ENCODE measurements at regions of chr1 and their contacts with region 1.

Region 1: GRCh38 chr1:59596441-59596861 is 218.3 kb upstream of the HOOK1 start:
- DNase-seq: peak in 1 of 2 donors; percentile 16
- ATAC-seq: peak in 2 of 4 donors; percentile 25 to 26
- H3K4me3 ChIP-seq: no peak overlapping the region
- H3K27ac ChIP-seq: peak overlapping the region; percentile 90
- H3K4me1 ChIP-seq: peaks cover 59% of the 10 kb centered on the region
- H3K27me3 ChIP-seq: no peaks in the 10 kb centered on the region
- CTCF ChIP-seq: no peak

Region 2: GRCh38 chr1:59393211-59394180 is 203.0 kb before region 1 on chr1:
- intact Hi-C with region 1: loop called in 1 of 2 experiments (anchors 2 kb)
- DNase-seq: peak; percentile 77 to 91
- ATAC-seq: peak; percentile 92 to 96 (median 94)
- H3K4me3 ChIP-seq: peak overlapping the region; percentile 49
- H3K27ac ChIP-seq: peak overlapping the region; percentile 93
- H3K4me1 ChIP-seq: peaks cover 69% of the 10 kb centered on the region
- H3K27me3 ChIP-seq: no peaks in the 10 kb centered on the region
- CTCF ChIP-seq: no peak

Region 3: GRCh38 chr1:59520827-59521418 is 75.5 kb before region 1 on chr1:
- intact Hi-C with region 1: loop called in 1 of 2 experiments (anchors 5 kb)
- DNase-seq: no peak
- ATAC-seq: peak; percentile 48 to 62 (median 56)
- H3K4me3 ChIP-seq: no peak overlapping the region
- H3K27ac ChIP-seq: peak overlapping the region; percentile 86
- H3K4me1 ChIP-seq: peaks cover 34% of the 10 kb centered on the region
- H3K27me3 ChIP-seq: no peaks in the 10 kb centered on the region
- CTCF ChIP-seq: no peak

Region 4: DNA sequence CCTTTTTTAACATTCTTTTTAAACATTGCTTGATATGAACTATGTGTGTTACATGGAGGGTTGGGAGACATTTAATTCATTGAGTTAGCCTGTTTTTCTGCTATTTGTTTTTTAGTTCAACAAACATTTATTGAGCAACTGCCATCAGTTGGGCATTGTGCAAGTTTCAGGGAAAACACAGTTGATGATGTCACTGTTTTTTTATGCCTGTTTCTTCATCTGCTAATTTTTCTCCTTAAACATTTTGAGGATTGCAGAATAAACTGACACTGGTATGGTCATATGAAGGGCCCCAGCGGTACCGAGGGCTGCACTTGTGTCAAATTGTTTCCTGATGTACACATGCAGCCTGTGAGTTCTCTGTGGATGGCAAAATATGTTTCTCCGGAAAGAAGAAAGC is 46.5 kb before region 1 on chr1:
- intact Hi-C with region 1: loop called in 1 of 2 experiments (anchors 10 kb)
- DNase-seq: peak in 1 of 2 donors; percentile 30
- ATAC-seq: peak in 1 of 4 donors; percentile 35
- H3K4me3 ChIP-seq: no peak overlapping the region
- H3K27ac ChIP-seq: peak overlapping the region; percentile 28
- H3K4me1 ChIP-seq: peaks cover 38% of the 10 kb centered on the region
- H3K27me3 ChIP-seq: no peaks in the 10 kb centered on the region
- CTCF ChIP-seq: no peak

Region 5: GRCh38 chr1:59678493-59679228 is 82.2 kb after region 1 on chr1:
- intact Hi-C with region 1: loop called in 1 of 2 experiments (anchors 5 kb)
- DNase-seq: no peak
- ATAC-seq: no peak
- H3K4me3 ChIP-seq: no peak overlapping the region
- H3K27ac ChIP-seq: peak overlapping the region; percentile 32
- H3K4me1 ChIP-seq: peaks cover 64% of the 10 kb centered on the region
- H3K27me3 ChIP-seq: no peaks in the 10 kb centered on the region
- CTCF ChIP-seq: no peak

Region 6: DNA sequence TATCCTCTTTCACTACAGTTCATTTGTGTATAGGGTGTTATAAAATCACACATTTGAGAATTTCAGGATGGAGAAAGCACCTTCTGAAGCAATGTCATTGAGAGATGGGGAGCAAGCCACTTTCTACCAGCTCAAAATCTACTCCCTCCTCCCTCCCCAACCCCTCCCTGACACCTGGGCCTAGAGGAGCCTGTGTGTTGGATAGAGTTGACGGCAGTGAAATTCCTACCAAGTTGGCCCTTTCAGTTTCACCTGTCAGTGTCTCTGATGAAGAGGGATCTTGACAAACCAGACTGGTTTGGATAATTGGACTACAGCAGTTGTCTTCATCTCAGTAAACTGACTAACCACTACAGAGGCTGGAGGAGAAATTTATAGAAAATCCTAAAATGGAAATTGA is 93.3 kb after region 1 on chr1:
- intact Hi-C with region 1: loop called (anchors 2 to 5 kb)
- DNase-seq: no peak
- ATAC-seq: peak in 3 of 4 donors; percentile 18 to 58 (median 56)
- H3K4me3 ChIP-seq: no peak overlapping the region
- H3K27ac ChIP-seq: peak overlapping the region; percentile 96
- H3K4me1 ChIP-seq: peaks cover 73% of the 10 kb centered on the region
- H3K27me3 ChIP-seq: no peaks in the 10 kb centered on the region
- CTCF ChIP-seq: no peak

Region 7: GRCh38 chr1:59971464-59971911 is 375.0 kb after region 1 on chr1:
- intact Hi-C with region 1: no loop called
- DNase-seq: peak; percentile 62 to 79
- ATAC-seq: peak; percentile 79 to 94 (median 84)
- H3K4me3 ChIP-seq: no peak overlapping the region
- H3K27ac ChIP-seq: no peak overlapping the region
- H3K4me1 ChIP-seq: no peaks in the 10 kb centered on the region
- H3K27me3 ChIP-seq: peaks cover 0 to 4% (median 0%) of the 10 kb centered on the region in 3 donors
- CTCF ChIP-seq: peak; percentile 92